Heart right ventricle (tissue), 16 donors: ENCODE measurements at regions of chr4 and their contacts with region 1.

Region 1: DNA sequence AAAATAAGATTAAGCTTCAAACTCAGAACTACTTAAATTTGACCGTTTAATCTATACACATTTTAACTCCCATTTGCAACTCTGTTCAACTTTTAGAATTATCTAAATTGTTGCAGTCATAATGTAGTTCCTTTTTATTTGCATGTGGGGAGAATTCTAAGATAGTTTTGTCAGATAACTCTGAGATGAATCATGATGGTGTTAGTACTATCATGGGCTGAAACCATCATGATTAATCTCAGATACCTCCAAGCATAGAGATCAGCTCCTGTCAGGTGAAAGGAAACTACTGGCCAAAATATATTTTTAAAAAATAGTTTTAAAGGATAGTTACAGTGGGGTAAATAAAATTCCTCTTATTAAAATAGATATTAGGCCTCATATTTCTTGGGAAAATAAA is 39.0 kb downstream of the FBXO8 start:
- DNase-seq: no peak
- ATAC-seq: no peak
- H3K4me3 ChIP-seq: no peak overlapping the region
- H3K27ac ChIP-seq: no peak overlapping the region
- H3K4me1 ChIP-seq: peaks cover 0 to 12% (median 6%) of the 10 kb centered on the region in 9 donors
- H3K27me3 ChIP-seq: no peaks in the 10 kb centered on the region
- CTCF ChIP-seq: no peak

Region 2: GRCh38 chr4:174292473-174292872 is 48.0 kb after region 1 on chr4:
- intact Hi-C with region 1: loop called in 1 of 10 experiments (anchors 10 kb)
- DNase-seq: no peak
- ATAC-seq: no peak
- H3K4me3 ChIP-seq: no peak overlapping the region
- H3K27ac ChIP-seq: no peak overlapping the region
- H3K4me1 ChIP-seq: no peaks in the 10 kb centered on the region
- H3K27me3 ChIP-seq: no peaks in the 10 kb centered on the region
- CTCF ChIP-seq: no peak